Lower leg skin (tissue), 4 donors: ENCODE measurements at regions of chr1 and their contacts with region 1.

Region 1: GRCh38 chr1:64242895-64243756 is 39.7 kb downstream of the UBE2U start:
- DNase-seq: no peak
- H3K4me3 ChIP-seq: no peak overlapping the region
- CTCF ChIP-seq: no peak
- POLR2A ChIP-seq: no peak

Region 2: GRCh38 chr1:63615768-63616420 is 627.2 kb before region 1 on chr1:
- intact Hi-C with region 1: loop called (anchors 5 kb)
- DNase-seq: peak in 1 of 2 donors; percentile 82
- H3K4me3 ChIP-seq: no peak overlapping the region
- CTCF ChIP-seq: peak in 1 of 3 donors; percentile 77
- POLR2A ChIP-seq: no peak

Region 3: GRCh38 chr1:63674238-63674864 is 568.8 kb before region 1 on chr1:
- intact Hi-C with region 1: loop called (anchors 5 kb)
- DNase-seq: peak; percentile 45 to 87
- H3K4me3 ChIP-seq: no peak overlapping the region
- CTCF ChIP-seq: no peak
- POLR2A ChIP-seq: no peak

Region 4: GRCh38 chr1:63799820-63800219 is 443.3 kb before region 1 on chr1:
- intact Hi-C with region 1: no loop called
- DNase-seq: no peak
- H3K4me3 ChIP-seq: no peak overlapping the region
- CTCF ChIP-seq: no peak
- POLR2A ChIP-seq: no peak

Region 5: DNA sequence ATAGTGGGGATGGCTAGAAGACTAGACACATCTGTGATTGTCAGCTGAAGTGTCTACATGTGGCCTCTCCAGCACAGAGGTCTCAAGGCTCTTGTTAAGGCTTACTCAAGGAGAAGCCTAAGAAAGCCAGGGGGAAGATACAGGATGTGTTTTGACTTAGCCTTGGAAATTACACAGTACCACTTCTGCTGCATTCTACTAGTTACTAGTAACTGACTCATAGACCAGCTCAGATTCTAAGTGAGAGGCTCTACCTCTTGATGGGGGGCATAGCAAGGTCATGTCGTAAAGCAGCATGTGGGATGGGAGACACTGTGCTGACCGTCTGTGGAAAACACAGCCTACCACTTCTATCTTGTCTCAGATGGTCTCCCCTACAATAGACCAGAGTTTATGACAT is 59.8 kb after region 1 on chr1:
- intact Hi-C with region 1: no loop called
- DNase-seq: no peak
- H3K4me3 ChIP-seq: no peak overlapping the region
- CTCF ChIP-seq: no peak
- POLR2A ChIP-seq: no peak